SK-N-SH (cell line): ENCODE measurements at regions of chr15 and their contacts with region 1.

Region 1: GRCh38 chr15:45795440-45796069 is 160.7 kb downstream of the SQOR start:
- DNase-seq: peak; percentile 35
- H3K4me3 ChIP-seq: no peak overlapping the region; a peak in 1 of 4 replicates
- H3K27ac ChIP-seq: no peak overlapping the region
- H3K4me1 ChIP-seq: no peaks in the 10 kb centered on the region
- H3K27me3 ChIP-seq: no peaks in the 10 kb centered on the region
- CTCF ChIP-seq: peak; percentile 45
- EP300 ChIP-seq: no peak
- RAD21 ChIP-seq: peak; percentile 85

Region 2: GRCh38 chr15:45650889-45651525 is 144.5 kb before region 1 on chr15:
- CTCF ChIA-PET with region 1: no interaction called
- POLR2A ChIA-PET with region 1: no interaction called
- DNase-seq: no peak
- H3K4me3 ChIP-seq: no peak overlapping the region
- H3K27ac ChIP-seq: no peak overlapping the region
- H3K4me1 ChIP-seq: no peaks in the 10 kb centered on the region; a peak in 1 of 4 replicates
- H3K27me3 ChIP-seq: no peaks in the 10 kb centered on the region
- CTCF ChIP-seq: no peak
- EP300 ChIP-seq: no peak
- RAD21 ChIP-seq: no peak

Region 3: GRCh38 chr15:45705510-45706473 is 89.8 kb before region 1 on chr15:
- CTCF ChIA-PET with region 1: interaction called, 153 read pairs
- POLR2A ChIA-PET with region 1: no interaction called
- DNase-seq: peak; percentile 82
- H3K4me3 ChIP-seq: peak overlapping the region; percentile 54 to 65
- H3K27ac ChIP-seq: no peak overlapping the region; a peak in 1 of 4 replicates
- H3K4me1 ChIP-seq: no peaks in the 10 kb centered on the region
- H3K27me3 ChIP-seq: no peaks in the 10 kb centered on the region
- CTCF ChIP-seq: peak; percentile 88
- EP300 ChIP-seq: no peak
- RAD21 ChIP-seq: peak; percentile 85

Region 4: DNA sequence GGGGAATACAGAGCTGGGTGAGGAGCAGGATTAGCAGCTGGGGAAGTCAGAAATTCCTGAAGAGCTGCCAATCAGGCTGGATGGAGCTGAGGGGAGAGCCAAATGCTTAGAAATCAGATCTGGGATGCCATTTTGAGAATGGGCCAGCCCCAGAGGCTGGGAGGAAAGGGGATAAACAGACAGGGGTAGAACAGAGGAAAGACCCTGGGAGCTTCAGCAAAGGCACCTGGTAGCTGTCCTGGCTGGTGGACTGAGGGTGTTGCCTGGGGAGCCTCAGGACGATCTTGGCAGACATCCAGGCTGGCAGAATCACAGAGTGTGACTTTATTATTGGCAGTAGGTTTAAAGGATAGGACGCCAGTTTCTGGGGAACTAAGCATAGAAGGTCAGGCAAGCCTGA is 62.9 kb before region 1 on chr15:
- CTCF ChIA-PET with region 1: interaction called, 25 read pairs
- POLR2A ChIA-PET with region 1: no interaction called
- DNase-seq: peak; percentile 34
- H3K4me3 ChIP-seq: no peak overlapping the region
- H3K27ac ChIP-seq: no peak overlapping the region; a peak in 1 of 4 replicates
- H3K4me1 ChIP-seq: peaks cover 0 to 20% of the 10 kb centered on the region in 2 experiments; a peak in 2 of 4 replicates
- H3K27me3 ChIP-seq: 0 out of 2 replicates have a peak, but pooled peaks cover 8% of the 10 kb centered on the region
- CTCF ChIP-seq: no peak
- EP300 ChIP-seq: no peak
- RAD21 ChIP-seq: no peak

Region 5: DNA sequence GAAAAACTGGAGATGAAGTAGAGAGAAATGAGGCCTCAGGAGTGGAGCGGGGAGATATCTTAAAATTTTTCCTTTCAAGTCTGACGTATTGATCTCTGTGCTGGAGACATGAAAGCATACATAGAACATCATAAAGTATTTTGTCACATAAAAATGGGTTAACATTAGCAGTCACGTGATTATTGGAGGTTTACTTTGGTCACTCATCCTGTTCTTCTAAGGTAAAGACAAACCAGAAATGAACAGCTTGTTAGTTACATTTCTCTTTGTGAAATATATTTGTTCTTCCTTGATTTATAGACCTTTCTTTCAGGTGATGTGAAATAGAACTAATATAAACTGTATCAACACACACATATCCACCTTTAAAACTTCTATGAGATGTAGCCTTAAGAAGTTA is 163.4 kb after region 1 on chr15:
- CTCF ChIA-PET with region 1: no interaction called
- POLR2A ChIA-PET with region 1: no interaction called
- DNase-seq: no peak
- H3K4me3 ChIP-seq: no peak overlapping the region
- H3K27ac ChIP-seq: no peak overlapping the region
- H3K4me1 ChIP-seq: no peaks in the 10 kb centered on the region
- H3K27me3 ChIP-seq: no peaks in the 10 kb centered on the region
- CTCF ChIP-seq: no peak
- EP300 ChIP-seq: no peak
- RAD21 ChIP-seq: no peak

Region 6: GRCh38 chr15:46080016-46080415 is 284.5 kb after region 1 on chr15:
- CTCF ChIA-PET with region 1: interaction called, 17 read pairs
- POLR2A ChIA-PET with region 1: no interaction called
- DNase-seq: peak; percentile 61
- H3K4me3 ChIP-seq: no peak overlapping the region
- H3K27ac ChIP-seq: peak overlapping the region in 1 of 2 experiments; percentile 99; a peak in 2 of 4 replicates
- H3K4me1 ChIP-seq: peaks cover 0 to 17% of the 10 kb centered on the region in 2 experiments; a peak in 3 of 4 replicates
- H3K27me3 ChIP-seq: no peaks in the 10 kb centered on the region
- CTCF ChIP-seq: no peak
- EP300 ChIP-seq: peak in 1 of 2 experiments; percentile 89; a peak in 2 of 4 replicates
- RAD21 ChIP-seq: peak; percentile 35

Region 7: GRCh38 chr15:46251903-46252302 is 456.3 kb after region 1 on chr15:
- CTCF ChIA-PET with region 1: no interaction called
- POLR2A ChIA-PET with region 1: no interaction called
- DNase-seq: no peak
- H3K4me3 ChIP-seq: no peak overlapping the region
- H3K27ac ChIP-seq: no peak overlapping the region
- H3K4me1 ChIP-seq: no peaks in the 10 kb centered on the region; a peak in 1 of 4 replicates
- H3K27me3 ChIP-seq: no peaks in the 10 kb centered on the region
- CTCF ChIP-seq: no peak
- EP300 ChIP-seq: no peak
- RAD21 ChIP-seq: no peak

Region 8: DNA sequence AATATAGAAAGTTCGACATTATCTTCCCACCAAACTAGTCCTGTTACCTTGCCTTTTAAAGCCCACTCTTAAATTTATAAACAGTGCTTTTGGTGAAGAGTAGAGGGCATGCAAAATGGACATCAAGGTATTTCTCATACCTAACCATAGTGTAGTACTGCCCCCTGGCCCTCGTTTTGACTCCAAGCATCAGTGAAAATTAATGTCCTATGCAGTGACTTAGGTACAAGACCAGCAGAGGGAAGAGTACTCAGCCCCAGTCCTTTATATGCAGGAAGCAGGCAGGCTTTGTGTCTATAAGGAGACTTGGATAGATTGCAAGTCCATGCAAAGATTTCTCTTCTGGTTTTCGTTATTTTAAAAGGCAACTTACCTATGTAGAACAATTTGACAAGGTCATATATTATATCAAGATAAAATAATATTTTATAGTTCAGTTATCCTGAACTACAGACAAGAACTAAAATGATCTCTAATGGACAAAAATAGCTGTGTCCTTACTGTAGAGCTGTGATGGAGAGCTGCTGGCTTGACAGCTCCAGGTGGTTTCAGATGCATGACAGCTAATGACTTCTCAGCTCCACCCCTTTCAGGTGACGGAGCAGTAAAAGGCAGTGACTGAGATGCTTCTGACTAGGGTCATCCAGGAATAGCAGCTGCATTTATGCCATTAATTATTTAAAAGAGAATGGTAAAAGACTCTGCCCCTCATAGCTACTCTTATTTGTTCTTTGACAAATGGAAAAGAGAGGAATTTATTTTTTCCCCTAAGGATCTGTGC is 485.4 kb after region 1 on chr15:
- CTCF ChIA-PET with region 1: interaction called, 23 read pairs
- POLR2A ChIA-PET with region 1: no interaction called
- DNase-seq: peak; percentile 23
- H3K4me3 ChIP-seq: no peak overlapping the region
- H3K27ac ChIP-seq: no peak overlapping the region
- H3K4me1 ChIP-seq: peaks cover 0 to 6% of the 10 kb centered on the region in 2 experiments; a peak in 2 of 4 replicates
- H3K27me3 ChIP-seq: no peaks in the 10 kb centered on the region
- CTCF ChIP-seq: 0 out of 2 replicates have a peak, but pooled peaks have one; percentile 8
- EP300 ChIP-seq: no peak
- RAD21 ChIP-seq: peak; percentile 81